ENCODE measurements at regions of chr5 and their contacts with region 1.

Region 1: GRCh38 chr5:42811591-42812446 is at the start of gene SELENOP:
- DNase-seq: peak in 4 of 5 donors; percentile 49 to 79 (median 66)
- ATAC-seq: peak; percentile 95 to 96 (median 96)
- H3K4me3 ChIP-seq: peak within 1 kb of the TSS; percentile 18 to 70 (median 58)
- H3K27ac ChIP-seq: peak within 1 kb of the TSS; percentile 69 to 94 (median 87)
- H3K4me1 ChIP-seq: peaks cover 0 to 40% (median 24%) of the 10 kb centered on the region in 12 donors
- H3K27me3 ChIP-seq: no peaks in the 10 kb centered on the region
- CTCF ChIP-seq: no peak
- POLR2A ChIP-seq: peak; percentile 30 to 90
- total RNA-seq, gene SELENOP: 167 to 547 (median 255) TPM

Region 2: GRCh38 chr5:42858031-42858643 is 46.3 kb after region 1 on chr5:
- intact Hi-C with region 1: loop called in 4 of 10 experiments (anchors 5 kb)
- DNase-seq: peak in 1 of 5 donors; percentile 31
- ATAC-seq: peak; percentile 70 to 90 (median 82)
- H3K4me3 ChIP-seq: no peak overlapping the region
- H3K27ac ChIP-seq: peak overlapping the region in 11 of 12 donors; percentile 3 to 72 (median 46)
- H3K4me1 ChIP-seq: peaks cover 0 to 21% (median 10%) of the 10 kb centered on the region in 12 donors
- H3K27me3 ChIP-seq: no peaks in the 10 kb centered on the region
- CTCF ChIP-seq: no peak
- POLR2A ChIP-seq: no peak

Region 3: GRCh38 chr5:42881416-42882117 is 69.7 kb after region 1 on chr5:
- intact Hi-C with region 1: loop called in 4 of 10 experiments (anchors 5 to 10 kb)
- DNase-seq: no peak
- ATAC-seq: peak in 2 of 4 donors; percentile 50 to 76
- H3K4me3 ChIP-seq: no peak overlapping the region
- H3K27ac ChIP-seq: peak overlapping the region in 5 of 12 donors; percentile 8 to 70 (median 22)
- H3K4me1 ChIP-seq: peaks cover 0 to 19% (median 0%) of the 10 kb centered on the region in 12 donors
- H3K27me3 ChIP-seq: no peaks in the 10 kb centered on the region
- CTCF ChIP-seq: no peak
- POLR2A ChIP-seq: no peak